Left colon (tissue), 2 donors: ENCODE measurements at regions of chr9 and their contacts with region 1.

Region 1: GRCh38 chr9:103139891-103140290 is 144.8 kb downstream of the CYLC2 start:
- DNase-seq: no peak
- ATAC-seq: no peak

Region 2: GRCh38 chr9:102185962-102186361 is 953.9 kb before region 1 on chr9:
- intact Hi-C with region 1: loop called in 1 of 2 experiments (anchors 10 kb)
- DNase-seq: no peak
- ATAC-seq: no peak